Prostate gland (tissue), 2 donors: ENCODE measurements at regions of chr14 and their contacts with region 1.

Region 1: GRCh38 chr14:35140718-35141581 is 18.6 kb downstream of the PRORP start:
- DNase-seq: no peak
- H3K4me3 ChIP-seq: no peak overlapping the region
- H3K27ac ChIP-seq: no peak overlapping the region
- H3K4me1 ChIP-seq: no peaks in the 10 kb centered on the region
- H3K27me3 ChIP-seq: no peaks in the 10 kb centered on the region
- CTCF ChIP-seq: peak in 3 of 4 experiments; percentile 47 to 65 (median 48)
- POLR2A ChIP-seq: no peak

Region 2: DNA sequence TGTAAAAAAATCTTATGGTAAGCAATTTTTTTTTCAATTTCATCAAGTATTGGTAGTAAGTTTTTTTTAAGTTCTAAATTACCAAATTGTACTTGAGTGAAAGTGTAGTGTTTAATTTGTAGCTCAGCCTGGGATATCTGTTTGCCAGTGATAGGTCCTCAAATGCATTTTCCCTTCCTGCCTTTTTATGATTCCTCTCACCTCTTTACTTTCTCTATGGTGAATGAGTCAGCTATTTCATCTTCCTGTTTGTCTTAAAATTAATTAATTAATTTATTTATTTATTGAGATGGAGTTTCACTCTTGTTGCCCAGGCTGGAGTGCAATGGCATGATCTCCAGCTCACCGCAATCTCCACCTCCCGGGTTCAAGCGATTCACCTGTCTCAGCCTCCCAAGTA is 147.5 kb before region 1 on chr14:
- intact Hi-C with region 1: no loop called
- DNase-seq: no peak
- H3K4me3 ChIP-seq: no peak overlapping the region
- H3K27ac ChIP-seq: no peak overlapping the region
- H3K4me1 ChIP-seq: no peaks in the 10 kb centered on the region
- H3K27me3 ChIP-seq: no peaks in the 10 kb centered on the region
- CTCF ChIP-seq: no peak
- POLR2A ChIP-seq: no peak

Region 3: DNA sequence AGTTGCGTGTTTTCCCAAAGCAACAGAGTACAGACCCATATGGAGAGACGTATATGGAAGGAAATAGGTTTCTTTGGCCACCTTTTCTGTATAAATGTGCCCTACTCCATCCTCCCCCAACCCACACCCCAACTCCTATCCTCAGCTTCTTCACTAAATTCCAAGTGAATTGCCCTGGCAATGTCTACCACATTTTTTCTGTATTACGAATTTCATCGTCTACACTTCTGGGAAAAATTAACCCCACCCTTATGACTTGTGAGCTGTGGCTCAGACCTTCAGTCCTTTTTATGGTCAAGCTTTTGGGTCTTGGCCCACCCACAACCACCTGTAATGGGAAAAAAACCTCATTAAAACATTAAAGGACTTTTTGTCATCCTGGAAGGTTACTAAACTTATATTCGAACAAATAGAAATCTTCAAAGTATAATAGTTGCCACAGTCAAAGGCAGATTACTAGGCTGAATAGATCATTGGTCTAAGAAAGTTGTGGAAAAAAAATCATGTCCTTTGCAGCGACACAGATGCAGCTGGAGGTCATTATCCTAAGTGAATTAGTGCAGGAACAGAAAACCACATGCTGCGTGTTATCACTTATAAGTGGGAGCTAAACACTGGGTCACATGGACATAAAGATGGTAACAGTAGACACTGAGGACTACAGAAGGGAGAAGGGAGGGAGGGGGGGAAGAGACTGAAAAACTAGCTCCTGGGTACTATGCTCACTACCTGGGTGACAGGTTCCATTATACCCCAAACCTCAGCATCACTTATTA is 279.3 kb after region 1 on chr14:
- intact Hi-C with region 1: loop called (anchors 5 kb)
- DNase-seq: no peak
- H3K4me3 ChIP-seq: no peak overlapping the region
- H3K27ac ChIP-seq: no peak overlapping the region
- H3K4me1 ChIP-seq: no peaks in the 10 kb centered on the region
- H3K27me3 ChIP-seq: no peaks in the 10 kb centered on the region
- CTCF ChIP-seq: no peak
- POLR2A ChIP-seq: no peak

Region 4: GRCh38 chr14:35438910-35439713 is 298.2 kb after region 1 on chr14:
- intact Hi-C with region 1: no loop called
- DNase-seq: no peak
- H3K4me3 ChIP-seq: no peak overlapping the region
- H3K27ac ChIP-seq: no peak overlapping the region
- H3K4me1 ChIP-seq: no peaks in the 10 kb centered on the region
- H3K27me3 ChIP-seq: no peaks in the 10 kb centered on the region
- CTCF ChIP-seq: no peak
- POLR2A ChIP-seq: no peak